ENCODE measurements at regions of chr12 and their contacts with region 1.

Region 1: DNA sequence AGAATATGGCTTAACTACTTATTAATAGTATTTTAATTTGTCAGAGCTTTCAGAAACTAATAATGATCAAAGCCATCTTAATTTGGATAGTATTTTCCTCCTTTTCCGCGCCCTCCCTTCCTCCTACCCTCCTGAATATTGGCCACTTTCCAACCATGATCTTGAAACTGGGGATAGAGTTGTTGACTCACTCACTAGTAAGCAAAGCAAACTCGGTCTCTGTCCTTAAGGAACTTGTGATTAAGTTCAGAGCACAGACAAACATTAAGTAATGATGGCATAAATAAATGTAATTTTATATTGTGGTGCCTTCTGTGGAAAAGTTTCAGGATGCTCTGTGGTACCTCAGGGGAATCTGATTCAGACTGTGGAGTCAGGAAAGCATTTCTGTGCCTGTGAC is 75.7 kb downstream of the LRRK2 start:
- DNase-seq: no peak
- CTCF ChIP-seq: no peak

Region 2: GRCh38 chr12:40127408-40127807 is 173.1 kb before region 1 on chr12:
- in situ Hi-C with region 1: no loop called
- DNase-seq: no peak
- CTCF ChIP-seq: no peak

Region 3: GRCh38 chr12:40152783-40153383 is 147.6 kb before region 1 on chr12:
- in situ Hi-C with region 1: loop called (anchors 10 kb)
- DNase-seq: no peak
- CTCF ChIP-seq: peak; percentile 70

Region 4: GRCh38 chr12:40575987-40576386 is 275.5 kb after region 1 on chr12:
- in situ Hi-C with region 1: no loop called
- DNase-seq: no peak
- CTCF ChIP-seq: no peak

Measured in GM13977 (cell line).